Activated T-helper 1 cell treated with anti-CD3 and anti-CD28 coated beads, Interleukin-12 subunit alpha, Interleukin-12 subunit beta, Interleukin-2, Interleukin-4 antibody, amounts not matched to agents 30 ng/mL and 10 ng/mL and 1 ng/mL, durations not matched to agents 14 hours and 24 hours and 36 hours (primary cell): ENCODE measurements at regions of chr13 and their contacts with region 1.

Region 1: DNA sequence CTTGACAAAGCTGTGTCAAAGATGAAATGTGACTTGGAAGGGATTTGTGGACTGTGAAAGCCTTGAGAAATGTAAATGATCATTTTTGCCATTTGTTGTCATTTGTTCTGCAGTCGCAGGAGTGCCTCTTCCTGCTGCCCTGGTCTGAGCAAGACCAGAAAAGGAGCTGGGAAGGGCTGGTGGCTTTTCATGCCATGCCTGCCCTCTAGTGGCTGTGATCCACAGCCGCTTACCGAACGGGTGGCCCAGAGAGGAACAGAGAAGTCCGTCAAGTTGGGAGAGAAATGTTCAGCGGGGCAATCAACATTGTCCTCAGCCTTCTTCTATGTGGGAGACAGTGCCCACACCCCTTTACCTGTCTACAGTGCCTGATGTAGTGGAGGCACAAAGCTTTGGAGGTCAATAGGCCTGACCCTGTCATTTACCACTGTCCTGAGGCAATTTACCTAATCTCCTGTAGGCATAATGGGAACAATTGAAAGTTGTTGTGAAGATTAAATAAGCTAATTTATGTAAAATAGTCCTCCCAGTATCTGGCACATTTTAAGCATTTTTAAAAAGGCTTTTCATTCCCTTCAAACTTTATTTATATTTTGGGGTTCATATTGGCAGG is 224.4 kb downstream of the B3GLCT start:
- DNase-seq: peak; percentile 20
- H3K4me3 Mint-ChIP-seq: no peak overlapping the region
- H3K27ac Mint-ChIP-seq: no peak overlapping the region
- H3K4me1 Mint-ChIP-seq: no peaks in the 10 kb centered on the region
- H3K27me3 Mint-ChIP-seq: no peaks in the 10 kb centered on the region

Region 2: DNA sequence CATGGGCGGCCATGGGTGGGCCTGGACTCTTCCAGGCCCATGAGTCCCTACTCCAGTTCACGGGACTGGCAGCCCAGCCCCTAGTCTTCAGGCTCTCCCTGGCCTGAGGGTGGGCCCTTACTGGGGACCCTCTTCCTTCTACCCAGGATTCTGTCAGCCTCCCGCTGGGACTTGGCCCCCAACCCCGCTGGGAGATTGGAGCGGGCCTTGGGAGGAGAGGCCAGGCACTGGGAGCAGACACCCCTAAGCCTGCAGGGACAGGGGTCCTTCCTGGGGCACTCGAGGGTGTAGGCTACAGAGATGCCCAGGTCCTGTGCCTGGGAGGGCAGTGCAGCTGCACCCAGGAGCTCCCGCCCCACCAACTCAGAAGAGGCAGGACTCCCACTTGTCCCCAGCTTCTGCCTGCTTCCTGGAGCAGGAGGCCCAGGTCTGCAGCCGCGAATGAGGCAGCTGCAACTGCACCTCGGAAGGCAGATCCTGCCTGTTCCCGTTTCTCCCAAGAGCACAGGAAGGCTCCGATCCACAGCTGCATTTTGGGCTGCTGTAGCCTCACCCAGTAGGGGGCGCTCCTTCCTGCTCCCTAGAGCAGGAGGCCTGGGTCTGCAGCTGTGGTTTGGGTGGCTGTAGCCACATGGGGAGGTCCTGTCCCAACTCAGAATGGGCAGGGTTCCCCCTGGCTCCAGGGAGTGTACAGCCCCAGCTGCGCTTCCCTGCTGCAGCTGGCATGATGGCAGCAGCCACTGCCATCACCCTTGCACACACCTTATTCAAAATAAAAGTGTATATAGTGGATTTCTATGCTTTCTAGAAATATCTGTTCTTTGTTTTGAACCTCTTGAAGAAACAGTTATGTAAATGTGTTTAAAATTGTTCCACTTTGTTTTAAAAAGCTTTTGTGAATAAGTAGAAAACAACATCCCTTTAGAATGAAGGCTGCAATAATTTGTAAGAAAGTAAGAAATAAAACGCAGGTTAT is 445.0 kb before region 1 on chr13:
- intact Hi-C with region 1: loop called (anchors 10 kb)
- DNase-seq: peak; percentile 15
- H3K4me3 Mint-ChIP-seq: no peak overlapping the region
- H3K27ac Mint-ChIP-seq: no peak overlapping the region
- H3K4me1 Mint-ChIP-seq: no peaks in the 10 kb centered on the region
- H3K27me3 Mint-ChIP-seq: peaks cover 16% of the 10 kb centered on the region

Region 3: GRCh38 chr13:31199849-31200636 is 224.2 kb before region 1 on chr13 and contains the start of gene B3GLCT:
- intact Hi-C with region 1: loop called (anchors 1 kb)
- DNase-seq: peak; percentile 76
- H3K4me3 Mint-ChIP-seq: peak within 1 kb of the TSS; percentile 85
- H3K27ac Mint-ChIP-seq: peak within 1 kb of the TSS; percentile 80
- H3K4me1 Mint-ChIP-seq: peaks cover 32% of the 10 kb centered on the region
- H3K27me3 Mint-ChIP-seq: peaks cover 2% of the 10 kb centered on the region
- total RNA-seq, gene B3GLCT: 4.2 and 4.3 TPM in 2 replicates

Region 4: GRCh38 chr13:31236211-31236786 is 187.9 kb before region 1 on chr13:
- intact Hi-C with region 1: loop called (anchors 1 kb)
- DNase-seq: no peak
- H3K4me3 Mint-ChIP-seq: no peak overlapping the region
- H3K27ac Mint-ChIP-seq: no peak overlapping the region
- H3K4me1 Mint-ChIP-seq: no peaks in the 10 kb centered on the region
- H3K27me3 Mint-ChIP-seq: no peaks in the 10 kb centered on the region